CD8-positive, alpha-beta T cell (primary cell): ENCODE measurements at regions of chr19 and their contacts with region 1.

Region 1: DNA sequence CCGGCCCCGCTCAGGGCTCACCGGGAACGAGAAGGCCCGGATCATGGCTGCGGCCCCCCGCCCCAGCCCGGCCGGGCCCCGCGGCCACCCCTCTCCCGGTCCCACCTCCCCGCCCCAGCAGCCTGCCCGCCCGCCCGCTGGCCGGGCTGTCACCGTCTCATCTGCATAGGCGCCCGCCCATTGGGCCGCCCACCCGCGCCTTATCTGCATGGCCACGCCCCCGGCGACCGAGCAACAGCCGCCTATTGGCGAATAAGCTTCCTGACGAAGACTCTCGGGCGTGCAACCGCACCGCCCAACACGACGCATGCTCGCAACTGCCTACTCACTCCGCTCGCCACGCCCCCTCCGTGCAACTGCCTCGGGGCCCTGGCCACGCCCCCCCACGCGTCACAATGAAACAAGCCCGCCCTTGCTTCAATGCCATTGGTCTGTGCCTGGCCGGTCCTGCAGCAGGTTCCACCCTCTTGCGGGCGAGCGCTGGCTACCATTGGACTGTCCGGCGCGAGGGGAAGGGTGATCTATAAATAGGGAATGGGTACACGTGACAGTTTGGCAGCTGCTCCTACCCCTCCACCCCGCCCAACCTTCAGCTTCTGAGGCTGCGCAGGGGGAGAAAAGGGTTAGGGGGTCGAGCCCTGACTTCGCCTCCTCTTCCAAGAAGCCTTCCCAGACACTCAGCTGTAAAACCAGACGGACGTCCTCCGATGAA is at the start of gene DACT3:
- DNase-seq: peak; percentile 99 to 100 (median 100)
- ATAC-seq: peak; percentile 89
- H3K4me3 ChIP-seq: peak within 1 kb of the TSS; percentile 54 to 62
- H3K4me3 Mint-ChIP-seq: peak within 1 kb of the TSS; percentile 82
- H3K27ac ChIP-seq: peak within 1 kb of the TSS; percentile 43 to 50
- H3K27ac Mint-ChIP-seq: peak within 1 kb of the TSS; percentile 87
- H3K4me1 ChIP-seq: peaks cover 26% of the 10 kb centered on the region
- H3K4me1 Mint-ChIP-seq: peaks cover 27% of the 10 kb centered on the region
- H3K27me3 ChIP-seq: peaks cover 7 to 21% of the 10 kb centered on the region in 2 experiments
- H3K27me3 Mint-ChIP-seq: peaks cover 17% of the 10 kb centered on the region
- CTCF ChIP-seq: no peak
- total RNA-seq, gene DACT3: not detected

Region 2: GRCh38 chr19:46537136-46538097 is 123.8 kb before region 1 on chr19:
- CTCF ChIA-PET with region 1: interaction called, 18 read pairs
- POLR2A ChIA-PET with region 1: no interaction called
- intact Hi-C with region 1: no loop called
- DNase-seq: peak; percentile 36 to 76 (median 68)
- ATAC-seq: peak; percentile 94
- H3K4me3 ChIP-seq: no peak overlapping the region
- H3K4me3 Mint-ChIP-seq: no peak overlapping the region
- H3K27ac ChIP-seq: no peak overlapping the region
- H3K27ac Mint-ChIP-seq: no peak overlapping the region
- H3K4me1 ChIP-seq: no peaks in the 10 kb centered on the region
- H3K4me1 Mint-ChIP-seq: peaks cover 4% of the 10 kb centered on the region
- H3K27me3 ChIP-seq: no peaks in the 10 kb centered on the region
- H3K27me3 Mint-ChIP-seq: no peaks in the 10 kb centered on the region
- CTCF ChIP-seq: peak; percentile 96

Region 3: DNA sequence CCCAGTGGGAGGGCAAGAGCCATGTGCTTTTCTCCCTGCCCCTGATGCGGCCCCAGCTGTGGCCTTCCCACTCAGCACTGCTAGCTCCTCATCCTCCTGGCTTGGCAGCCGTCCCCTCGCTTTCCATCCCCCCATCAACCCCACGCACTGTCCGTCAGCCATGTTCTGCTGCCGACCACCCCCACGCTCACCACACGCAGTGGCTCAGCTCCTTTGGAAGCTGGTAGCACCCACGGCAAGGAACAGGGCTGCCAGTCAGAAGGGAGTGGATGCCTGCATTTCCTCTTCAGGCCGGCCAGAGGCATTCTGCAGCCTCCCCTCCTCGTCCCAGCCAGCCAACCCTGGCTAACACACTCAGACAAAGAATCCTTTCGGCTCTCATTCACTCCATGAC is 53.7 kb before region 1 on chr19:
- CTCF ChIA-PET with region 1: interaction called, 126 read pairs
- POLR2A ChIA-PET with region 1: interaction called, 16 read pairs
- intact Hi-C with region 1: no loop called
- DNase-seq: peak in 1 of 9 experiments; percentile 37
- ATAC-seq: no peak
- H3K4me3 ChIP-seq: no peak overlapping the region
- H3K4me3 Mint-ChIP-seq: no peak overlapping the region
- H3K27ac ChIP-seq: no peak overlapping the region
- H3K27ac Mint-ChIP-seq: no peak overlapping the region
- H3K4me1 ChIP-seq: peaks cover 48% of the 10 kb centered on the region
- H3K4me1 Mint-ChIP-seq: peaks cover 63% of the 10 kb centered on the region
- H3K27me3 ChIP-seq: no peaks in the 10 kb centered on the region
- H3K27me3 Mint-ChIP-seq: no peaks in the 10 kb centered on the region
- CTCF ChIP-seq: no peak

Region 4: DNA sequence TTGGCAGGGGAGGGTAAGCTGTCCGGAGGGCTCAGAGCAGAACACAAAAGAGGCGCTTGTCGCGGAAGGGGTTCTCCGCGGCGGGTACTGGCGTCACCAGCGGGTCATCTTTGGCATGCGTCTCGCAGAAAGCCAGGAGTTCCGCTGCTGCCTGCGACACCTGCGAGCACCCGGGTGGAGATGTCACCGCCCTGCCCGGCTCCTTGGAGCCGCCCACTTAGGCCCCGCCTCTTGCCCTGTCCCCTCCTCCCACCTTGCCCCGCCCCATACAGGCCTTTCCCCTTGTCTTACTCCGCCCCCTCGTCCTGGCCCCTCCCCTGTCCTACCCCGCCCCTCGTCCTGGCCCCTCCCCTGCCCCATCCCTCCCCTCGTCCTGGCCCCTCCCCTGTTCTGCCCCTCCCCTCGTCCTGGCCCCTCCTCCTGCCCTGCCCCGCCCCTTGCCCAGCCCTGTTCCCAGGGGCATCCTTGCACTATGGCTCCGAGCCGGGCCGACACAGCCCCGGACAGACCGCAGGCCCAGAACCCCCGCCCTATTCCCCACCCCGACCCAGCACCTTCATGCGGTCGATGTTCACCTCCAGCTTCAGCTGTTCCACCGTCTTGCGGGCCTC is 27.0 kb before region 1 on chr19:
- CTCF ChIA-PET with region 1: interaction called, 19 read pairs
- POLR2A ChIA-PET with region 1: interaction called, 3 read pairs
- intact Hi-C with region 1: loop called (anchors 1 kb)
- DNase-seq: peak; percentile 86 to 96 (median 92)
- ATAC-seq: peak; percentile 83
- H3K4me3 ChIP-seq: peak overlapping the region; percentile 40 to 59
- H3K4me3 Mint-ChIP-seq: peak overlapping the region; percentile 80
- H3K27ac ChIP-seq: peak overlapping the region; percentile 35 to 48
- H3K27ac Mint-ChIP-seq: peak overlapping the region; percentile 90
- H3K4me1 ChIP-seq: peaks cover 36% of the 10 kb centered on the region
- H3K4me1 Mint-ChIP-seq: peaks cover 24% of the 10 kb centered on the region
- H3K27me3 ChIP-seq: peaks cover 0 to 24% of the 10 kb centered on the region in 2 experiments
- H3K27me3 Mint-ChIP-seq: no peaks in the 10 kb centered on the region
- CTCF ChIP-seq: no peak

Region 5: DNA sequence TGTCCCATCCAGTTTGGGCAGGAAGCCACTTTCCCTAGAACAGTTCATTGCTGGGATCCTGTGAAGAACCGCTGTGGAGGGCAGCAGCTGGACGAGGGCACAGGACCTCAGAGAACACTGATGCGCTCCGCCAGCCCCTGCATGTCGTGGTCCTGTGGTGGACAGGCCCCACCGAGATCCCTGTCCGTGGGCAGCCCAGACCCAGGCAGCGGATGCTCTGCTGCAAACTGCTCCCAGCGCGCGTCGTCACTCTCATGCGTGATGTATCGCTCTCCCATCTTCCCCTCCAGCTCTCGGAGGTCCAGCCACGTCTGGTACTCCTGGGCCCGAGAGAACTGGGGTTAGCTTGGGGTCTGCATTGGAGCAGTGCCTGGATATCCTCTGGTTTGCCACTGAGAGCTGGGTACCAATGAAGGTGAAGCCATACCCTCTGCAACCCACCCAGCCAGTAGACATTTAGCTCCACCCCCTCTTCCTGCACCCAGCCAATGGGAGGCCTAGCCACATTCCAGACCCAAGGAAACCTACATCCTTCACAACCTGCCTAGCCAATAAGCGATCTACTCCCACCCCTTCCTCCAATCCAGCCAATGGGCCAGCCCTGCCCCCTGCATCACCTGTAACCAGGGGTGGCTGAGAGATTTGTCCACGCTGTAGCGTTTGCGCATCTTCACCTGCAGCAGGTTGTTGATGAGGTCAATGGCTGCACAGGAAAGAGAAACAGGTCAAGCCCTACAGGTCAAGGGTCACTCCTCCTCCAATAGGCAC is 13.4 kb after region 1 on chr19:
- CTCF ChIA-PET with region 1: interaction called, 27 read pairs
- POLR2A ChIA-PET with region 1: no interaction called
- intact Hi-C with region 1: no loop called
- DNase-seq: no peak
- ATAC-seq: no peak
- H3K4me3 ChIP-seq: no peak overlapping the region
- H3K4me3 Mint-ChIP-seq: no peak overlapping the region
- H3K27ac ChIP-seq: no peak overlapping the region
- H3K27ac Mint-ChIP-seq: no peak overlapping the region
- H3K4me1 ChIP-seq: no peaks in the 10 kb centered on the region
- H3K4me1 Mint-ChIP-seq: peaks cover 3% of the 10 kb centered on the region
- H3K27me3 ChIP-seq: no peaks in the 10 kb centered on the region
- H3K27me3 Mint-ChIP-seq: no peaks in the 10 kb centered on the region
- CTCF ChIP-seq: no peak

Region 6: GRCh38 chr19:46728693-46729676 is 67.8 kb after region 1 on chr19:
- CTCF ChIA-PET with region 1: interaction called, 19 read pairs
- POLR2A ChIA-PET with region 1: no interaction called
- intact Hi-C with region 1: loop called in 1 of 2 experiments (anchors 2 kb)
- DNase-seq: peak; percentile 64 to 93 (median 84)
- ATAC-seq: peak; percentile 90
- H3K4me3 ChIP-seq: no peak overlapping the region
- H3K4me3 Mint-ChIP-seq: no peak overlapping the region
- H3K27ac ChIP-seq: no peak overlapping the region
- H3K27ac Mint-ChIP-seq: peak overlapping the region; percentile 32
- H3K4me1 ChIP-seq: peaks cover 13% of the 10 kb centered on the region
- H3K4me1 Mint-ChIP-seq: peaks cover 10% of the 10 kb centered on the region
- H3K27me3 ChIP-seq: no peaks in the 10 kb centered on the region
- H3K27me3 Mint-ChIP-seq: no peaks in the 10 kb centered on the region
- CTCF ChIP-seq: peak; percentile 90